Ovary (tissue), 10 donors: ENCODE measurements at regions of chr3 and their contacts with region 1.

Region 1: GRCh38 chr3:129824926-129825541 is 68.5 kb downstream of the TMCC1 start:
- DNase-seq: peak in 1 of 5 donors; percentile 33
- H3K4me3 ChIP-seq: no peak overlapping the region
- H3K27ac ChIP-seq: no peak overlapping the region
- H3K4me1 ChIP-seq: peaks cover 1% of the 10 kb centered on the region
- H3K27me3 ChIP-seq: no peaks in the 10 kb centered on the region
- CTCF ChIP-seq: peak; percentile 26 to 68 (median 59)
- EP300 ChIP-seq: no peak
- POLR2A ChIP-seq: no peak

Region 2: GRCh38 chr3:129507181-129507831 is 317.7 kb before region 1 on chr3:
- intact Hi-C with region 1: loop called in 1 of 4 experiments (anchors 10 kb)
- DNase-seq: no peak
- H3K4me3 ChIP-seq: no peak overlapping the region
- H3K27ac ChIP-seq: no peak overlapping the region
- H3K4me1 ChIP-seq: no peaks in the 10 kb centered on the region
- H3K27me3 ChIP-seq: no peaks in the 10 kb centered on the region
- CTCF ChIP-seq: no peak
- EP300 ChIP-seq: no peak
- POLR2A ChIP-seq: no peak

Region 3: GRCh38 chr3:129633751-129634392 is 191.2 kb before region 1 on chr3:
- intact Hi-C with region 1: loop called in 2 of 4 experiments (anchors 10 kb)
- DNase-seq: no peak
- H3K4me3 ChIP-seq: no peak overlapping the region
- H3K27ac ChIP-seq: no peak overlapping the region
- H3K4me1 ChIP-seq: no peaks in the 10 kb centered on the region
- H3K27me3 ChIP-seq: no peaks in the 10 kb centered on the region
- CTCF ChIP-seq: no peak
- EP300 ChIP-seq: no peak
- POLR2A ChIP-seq: no peak

Region 4: GRCh38 chr3:129645290-129645689 is 179.7 kb before region 1 on chr3:
- intact Hi-C with region 1: loop called in 3 of 4 experiments (anchors 5 to 10 kb)
- DNase-seq: no peak
- H3K4me3 ChIP-seq: no peak overlapping the region
- H3K27ac ChIP-seq: no peak overlapping the region
- H3K4me1 ChIP-seq: no peaks in the 10 kb centered on the region
- H3K27me3 ChIP-seq: no peaks in the 10 kb centered on the region
- CTCF ChIP-seq: no peak
- EP300 ChIP-seq: no peak
- POLR2A ChIP-seq: no peak

Region 5: GRCh38 chr3:129650256-129650872 is 174.7 kb before region 1 on chr3:
- intact Hi-C with region 1: loop called in 3 of 4 experiments (anchors 5 to 10 kb)
- DNase-seq: peak; percentile 58 to 82 (median 72)
- H3K4me3 ChIP-seq: no peak overlapping the region
- H3K27ac ChIP-seq: no peak overlapping the region
- H3K4me1 ChIP-seq: peaks cover 1% of the 10 kb centered on the region
- H3K27me3 ChIP-seq: no peaks in the 10 kb centered on the region
- CTCF ChIP-seq: peak in 2 of 3 donors; percentile 67
- EP300 ChIP-seq: no peak
- POLR2A ChIP-seq: no peak

Region 6: GRCh38 chr3:129690406-129690805 is 134.6 kb before region 1 on chr3:
- intact Hi-C with region 1: no loop called
- DNase-seq: peak in 1 of 5 donors; percentile 33
- H3K4me3 ChIP-seq: no peak overlapping the region
- H3K27ac ChIP-seq: no peak overlapping the region
- H3K4me1 ChIP-seq: peaks cover 5% of the 10 kb centered on the region
- H3K27me3 ChIP-seq: no peaks in the 10 kb centered on the region
- CTCF ChIP-seq: no peak
- EP300 ChIP-seq: no peak
- POLR2A ChIP-seq: no peak